ENCODE measurements at regions of chr7 and their contacts with region 1.

Region 1: GRCh38 chr7:127347567-127348246 is 44.8 kb downstream of the ZNF800 start:
- DNase-seq: peak; percentile 79
- H3K4me3 ChIP-seq: peak overlapping the region in 3 of 4 donors; percentile 25 to 51 (median 34)
- H3K27ac ChIP-seq: peak overlapping the region in 1 of 4 donors; percentile 30
- H3K4me1 ChIP-seq: peaks cover 0 to 9% (median 6%) of the 10 kb centered on the region in 4 donors
- H3K27me3 ChIP-seq: no peaks in the 10 kb centered on the region
- CTCF ChIP-seq: peak; percentile 35 to 60 (median 39)
- EP300 ChIP-seq: no peak
- POLR2A ChIP-seq: no peak

Region 2: DNA sequence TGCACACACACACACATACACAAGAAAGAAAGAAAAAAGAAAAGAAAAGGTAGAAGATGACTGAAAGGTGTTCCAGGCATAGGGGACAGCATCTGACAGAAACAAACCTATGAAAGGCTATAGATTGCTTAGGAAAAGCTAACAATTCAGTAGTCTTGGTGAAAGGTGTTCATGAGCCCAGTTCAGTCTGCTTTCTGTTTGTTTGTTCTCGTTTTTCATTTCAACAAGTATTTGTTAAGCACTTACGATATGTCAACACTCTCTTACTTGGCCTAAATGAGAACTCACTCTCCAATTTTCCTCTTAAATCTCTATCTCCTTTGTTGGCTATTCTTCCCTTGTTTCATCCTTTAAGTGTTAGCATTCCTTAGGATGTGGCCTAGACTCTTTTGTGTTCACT is 228.2 kb before region 1 on chr7:
- in situ Hi-C with region 1: no loop called
- intact Hi-C with region 1: no loop called
- DNase-seq: no peak
- H3K4me3 ChIP-seq: no peak overlapping the region
- H3K27ac ChIP-seq: no peak overlapping the region
- H3K4me1 ChIP-seq: no peaks in the 10 kb centered on the region
- H3K27me3 ChIP-seq: no peaks in the 10 kb centered on the region
- CTCF ChIP-seq: no peak
- EP300 ChIP-seq: no peak
- POLR2A ChIP-seq: no peak

Region 3: GRCh38 chr7:127447326-127447945 is 99.7 kb after region 1 on chr7:
- in situ Hi-C with region 1: loop called in 1 of 4 experiments (anchors 10 kb)
- intact Hi-C with region 1: no loop called
- DNase-seq: peak; percentile 38
- H3K4me3 ChIP-seq: no peak overlapping the region
- H3K27ac ChIP-seq: no peak overlapping the region
- H3K4me1 ChIP-seq: no peaks in the 10 kb centered on the region
- H3K27me3 ChIP-seq: peaks cover 12% of the 10 kb centered on the region
- CTCF ChIP-seq: peak; percentile 45 to 58 (median 56)
- EP300 ChIP-seq: no peak
- POLR2A ChIP-seq: no peak

Region 4: DNA sequence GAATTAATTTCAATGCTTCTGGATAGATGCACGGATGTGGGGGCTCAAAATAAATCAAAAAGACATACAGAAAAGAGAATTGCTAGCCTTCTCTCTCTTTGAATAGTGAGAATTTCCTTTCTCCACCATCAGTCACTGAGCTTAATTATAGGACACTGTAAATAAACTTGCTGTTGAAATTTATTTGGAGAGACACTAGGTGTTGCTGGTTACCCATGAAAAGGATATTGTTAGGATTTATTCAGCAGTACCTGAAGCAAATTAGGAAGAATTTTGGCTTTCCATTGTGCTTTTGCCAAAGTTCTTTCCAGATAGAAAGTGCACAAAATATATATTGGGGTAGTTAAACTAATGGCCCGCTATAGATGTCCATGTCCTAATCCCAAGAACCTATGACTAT is 210.1 kb after region 1 on chr7:
- in situ Hi-C with region 1: no loop called
- intact Hi-C with region 1: no loop called
- DNase-seq: no peak
- H3K4me3 ChIP-seq: no peak overlapping the region
- H3K27ac ChIP-seq: no peak overlapping the region
- H3K4me1 ChIP-seq: no peaks in the 10 kb centered on the region
- H3K27me3 ChIP-seq: no peaks in the 10 kb centered on the region
- CTCF ChIP-seq: no peak
- EP300 ChIP-seq: no peak
- POLR2A ChIP-seq: no peak